GM12878 (cell line): ENCODE measurements at regions of chr1 and their contacts with region 1.

Region 1: GRCh38 chr1:145957443-145958319 is at the start of gene LIX1L:
- DNase-seq: peak; percentile 89
- ATAC-seq: peak; percentile 90
- H3K4me3 ChIP-seq: peak within 1 kb of the TSS; percentile 78
- H3K27ac ChIP-seq: peak within 1 kb of the TSS; percentile 73
- H3K4me1 ChIP-seq: peaks cover 8% of the 10 kb centered on the region
- H3K27me3 ChIP-seq: no peaks in the 10 kb centered on the region; a peak in 1 of 4 replicates
- CTCF ChIP-seq: no peak
- EP300 ChIP-seq: no peak
- POLR2A ChIP-seq: peak; percentile 86
- RAD21 ChIP-seq: no peak
- polyA plus RNA-seq, gene LIX1L: 5.5 to 12.2 TPM

Region 2: GRCh38 chr1:145918144-145918992 is 39.3 kb before region 1 on chr1 and contains the start of gene PEX11B:
- CTCF ChIA-PET with region 1: interaction called, 3 read pairs
- POLR2A ChIA-PET with region 1: interaction called, 10 read pairs
- RAD21 ChIA-PET with region 1: interaction called, 11 read pairs
- SMC1A ChIA-PET with region 1: interaction called, 5 read pairs
- in situ Hi-C with region 1: no loop called
- intact Hi-C with region 1: no loop called
- DNase-seq: peak; percentile 75
- ATAC-seq: peak; percentile 94
- H3K4me3 ChIP-seq: peak within 1 kb of the TSS; percentile 97
- H3K27ac ChIP-seq: peak within 1 kb of the TSS; percentile 93
- H3K4me1 ChIP-seq: peaks cover 17% of the 10 kb centered on the region
- H3K27me3 ChIP-seq: no peaks in the 10 kb centered on the region
- CTCF ChIP-seq: no peak
- EP300 ChIP-seq: no peak
- POLR2A ChIP-seq: peak; percentile 93
- RAD21 ChIP-seq: no peak
- polyA plus RNA-seq, gene PEX11B: 44.8 to 69.4 TPM

Region 3: GRCh38 chr1:145927063-145927886 is 30.4 kb before region 1 on chr1 and contains the start of gene RBM8A:
- CTCF ChIA-PET with region 1: interaction called, 28 read pairs
- POLR2A ChIA-PET with region 1: interaction called, 58 read pairs
- RAD21 ChIA-PET with region 1: interaction called, 23 read pairs
- SMC1A ChIA-PET with region 1: interaction called, 30 read pairs
- in situ Hi-C with region 1: no loop called
- intact Hi-C with region 1: loop called (anchors 2 kb)
- DNase-seq: peak; percentile 99
- ATAC-seq: peak; percentile 98
- H3K4me3 ChIP-seq: peak within 1 kb of the TSS; percentile 90
- H3K27ac ChIP-seq: peak within 1 kb of the TSS; percentile 97
- H3K4me1 ChIP-seq: peaks cover 6% of the 10 kb centered on the region; the same call in 1 of the 2 replicates
- H3K27me3 ChIP-seq: no peaks in the 10 kb centered on the region
- CTCF ChIP-seq: peak; percentile 37 to 67 (median 58)
- EP300 ChIP-seq: 0 out of 4 replicates have a peak, but pooled peaks of 1 of the 2 experiments have one; percentile 11
- POLR2A ChIP-seq: peak; percentile 95
- RAD21 ChIP-seq: no peak
- polyA plus RNA-seq, gene RBM8A: 665 to 1,248 TPM

Region 4: GRCh38 chr1:145942405-145942804 is 15.3 kb before region 1 on chr1:
- CTCF ChIA-PET with region 1: interaction called, 12 read pairs
- POLR2A ChIA-PET with region 1: interaction called, 7 read pairs
- RAD21 ChIA-PET with region 1: no interaction called
- SMC1A ChIA-PET with region 1: interaction called, 9 read pairs
- in situ Hi-C with region 1: no loop called
- intact Hi-C with region 1: no loop called
- DNase-seq: no peak
- ATAC-seq: no peak
- H3K4me3 ChIP-seq: no peak overlapping the region
- H3K27ac ChIP-seq: no peak overlapping the region
- H3K4me1 ChIP-seq: no peaks in the 10 kb centered on the region
- H3K27me3 ChIP-seq: no peaks in the 10 kb centered on the region
- CTCF ChIP-seq: no peak
- EP300 ChIP-seq: no peak
- POLR2A ChIP-seq: no peak
- RAD21 ChIP-seq: no peak